Gastrocnemius medialis (tissue), 4 donors: ENCODE measurements at regions of chr1 and their contacts with region 1.

Region 1: GRCh38 chr1:1033009-1033587 is 13.2 kb downstream of the AGRN start:
- DNase-seq: peak; percentile 38 to 75
- ATAC-seq: peak; percentile 69 to 88
- H3K4me3 ChIP-seq: peak overlapping the region; percentile 15 to 48 (median 43)
- H3K27ac ChIP-seq: no peak overlapping the region
- H3K4me1 ChIP-seq: peaks cover 5 to 19% of the 10 kb centered on the region in 2 donors
- H3K27me3 ChIP-seq: peaks cover 12 to 40% (median 35%) of the 10 kb centered on the region in 3 donors
- CTCF ChIP-seq: peak; percentile 61 to 88 (median 76)
- POLR2A ChIP-seq: no peak

Region 2: DNA sequence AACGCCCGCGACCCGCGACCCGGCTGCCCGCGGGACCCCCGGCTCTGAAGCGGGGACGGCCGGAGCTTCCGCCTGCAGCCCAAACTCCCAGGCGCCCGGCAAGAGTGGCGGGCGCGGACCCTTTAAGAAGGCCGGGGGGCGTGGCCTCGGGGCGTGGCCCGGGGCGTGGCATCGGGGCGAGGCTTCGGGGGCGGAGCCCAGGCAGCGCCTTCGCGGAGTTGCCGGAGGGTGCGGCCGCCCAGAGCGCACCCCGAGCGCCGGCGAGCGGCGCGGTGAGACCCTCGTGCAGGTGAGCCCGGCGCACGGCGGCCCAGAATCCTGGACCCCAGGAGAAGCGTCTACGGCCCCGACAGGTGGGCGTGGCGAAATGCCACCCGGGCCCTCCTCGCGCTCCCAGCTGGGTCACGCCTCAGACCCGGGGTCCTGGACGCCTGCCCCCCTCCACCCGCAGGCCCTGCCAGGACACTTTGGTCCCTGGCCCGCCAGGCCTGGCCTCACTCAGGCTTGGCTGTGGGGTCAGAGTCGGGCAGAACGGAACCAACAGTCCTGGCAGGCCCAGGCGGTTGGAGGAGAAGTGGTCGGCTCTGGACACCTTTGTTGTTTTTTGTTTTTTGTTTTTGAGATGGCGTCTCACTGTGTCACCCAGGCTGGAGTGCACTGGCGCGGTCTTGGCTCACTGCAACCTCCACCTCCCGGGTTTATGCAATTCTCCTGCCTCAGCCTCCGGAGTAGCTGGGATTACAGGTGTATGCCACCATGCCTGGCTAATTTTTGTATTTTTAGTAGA is 26.6 kb after region 1 on chr1:
- in situ Hi-C with region 1: no loop called
- intact Hi-C with region 1: loop called (anchors 1 kb)
- DNase-seq: peak; percentile 65 to 82
- ATAC-seq: peak; percentile 88 to 93
- H3K4me3 ChIP-seq: peak overlapping the region; percentile 47 to 83 (median 64)
- H3K27ac ChIP-seq: no peak overlapping the region
- H3K4me1 ChIP-seq: peaks cover 10 to 18% of the 10 kb centered on the region in 2 donors
- H3K27me3 ChIP-seq: peaks cover 48 to 56% (median 51%) of the 10 kb centered on the region in 3 donors
- CTCF ChIP-seq: peak in 1 of 5 experiments; percentile 6
- POLR2A ChIP-seq: peak in 1 of 2 donors; percentile 13

Region 3: DNA sequence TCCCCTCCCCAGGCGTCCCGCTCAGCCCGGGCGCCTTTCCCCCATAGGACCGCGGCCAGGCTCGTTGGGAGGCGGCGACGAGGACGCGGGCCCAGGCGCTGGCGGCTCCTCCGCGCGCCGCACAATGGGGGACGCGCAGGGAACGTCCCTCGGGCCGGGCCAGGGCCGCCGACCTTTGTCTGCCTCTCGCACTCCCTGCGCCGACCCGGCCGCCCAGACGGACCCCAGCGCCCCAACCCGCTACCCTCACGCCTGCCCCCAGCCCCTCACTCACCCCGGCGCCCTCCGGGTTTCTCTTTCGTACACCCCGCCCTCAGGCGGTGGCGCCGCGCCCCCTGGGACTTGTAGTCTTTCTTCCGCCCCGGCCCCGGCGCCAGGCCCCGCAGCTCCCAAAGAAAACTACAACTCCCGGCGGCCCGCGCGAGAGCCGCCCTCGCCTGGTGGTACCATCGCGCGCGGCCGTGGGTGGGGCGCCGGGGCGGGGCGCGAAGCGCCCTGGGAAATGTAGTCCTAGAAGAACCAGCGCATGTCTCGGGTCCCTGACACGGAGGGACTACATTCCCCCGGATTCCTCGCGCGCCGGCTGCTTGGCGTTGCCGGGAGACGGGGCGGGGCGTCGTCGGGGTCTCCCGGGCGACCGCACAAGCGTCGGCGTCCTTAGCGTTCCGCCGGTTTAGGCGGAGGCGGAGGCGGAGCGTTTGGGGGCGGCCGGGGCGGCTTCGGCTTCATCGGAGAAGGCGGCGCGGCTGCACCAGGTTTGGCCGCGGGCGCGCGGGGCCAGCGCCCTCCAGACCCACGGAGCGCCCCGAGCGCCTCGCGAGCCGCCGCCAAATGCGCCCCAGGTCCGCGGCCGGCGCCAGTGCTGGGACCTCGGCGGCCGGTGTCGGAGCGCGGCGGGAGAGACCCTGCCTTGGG is 82.9 kb after region 1 on chr1 and contains the start of gene C1orf159:
- in situ Hi-C with region 1: no loop called
- intact Hi-C with region 1: loop called (anchors 10 kb)
- DNase-seq: peak; percentile 96 to 99
- ATAC-seq: peak; percentile 99
- H3K4me3 ChIP-seq: peak within 1 kb of the TSS; percentile 57 to 97 (median 76)
- H3K27ac ChIP-seq: peak within 1 kb of the TSS; percentile 63 to 85 (median 74)
- H3K4me1 ChIP-seq: peaks cover 3 to 7% of the 10 kb centered on the region in 2 donors
- H3K27me3 ChIP-seq: peaks cover 0 to 14% (median under 1%) of the 10 kb centered on the region in 3 donors
- CTCF ChIP-seq: no peak
- POLR2A ChIP-seq: no peak
- total RNA-seq, gene C1orf159: 2.8 to 6.4 (median 5.3) TPM

Region 4: DNA sequence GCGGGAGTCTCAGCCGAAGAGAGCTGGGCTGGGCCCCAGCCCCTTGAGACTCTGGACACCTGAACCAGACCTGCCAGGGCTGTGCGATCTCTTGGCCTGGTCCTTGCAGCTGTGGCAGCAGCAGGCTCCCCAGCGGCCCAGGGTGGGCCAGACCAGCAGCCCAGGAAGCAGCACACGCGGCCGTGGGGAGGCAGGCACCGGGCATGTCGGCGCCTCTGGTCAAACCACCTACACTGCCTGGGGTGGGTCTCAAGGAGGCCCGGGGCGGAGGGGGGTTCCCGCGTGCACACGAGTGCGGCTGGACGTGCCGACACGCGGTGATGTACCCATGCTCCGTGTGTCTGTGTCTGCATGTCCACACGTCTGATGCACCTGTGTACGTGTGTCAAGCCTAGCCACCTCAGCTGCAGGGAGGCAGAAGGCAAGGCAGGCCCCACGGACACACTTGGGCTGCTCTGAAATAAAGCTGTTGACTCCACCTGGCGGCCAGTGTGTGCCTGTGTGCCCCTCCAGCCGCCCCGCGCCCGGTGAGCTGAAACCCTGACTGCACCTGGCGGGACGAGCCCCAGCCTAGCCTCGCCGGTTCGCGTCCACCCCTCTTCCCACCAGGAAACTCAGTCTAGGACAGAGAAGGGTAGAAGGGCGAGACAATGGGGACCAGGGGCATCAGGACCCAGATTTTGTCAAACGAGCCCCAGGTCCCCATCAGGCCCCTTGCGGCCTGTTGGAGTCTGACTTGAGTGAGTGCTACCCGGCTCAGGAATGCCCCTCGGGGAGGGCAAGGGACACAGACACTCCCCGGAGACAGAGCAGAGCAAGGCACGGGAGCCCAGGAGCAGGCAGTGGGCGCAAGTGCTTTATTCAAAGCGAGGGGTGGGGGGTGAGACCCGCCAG is 258.7 kb after region 1 on chr1:
- in situ Hi-C with region 1: no loop called
- intact Hi-C with region 1: loop called (anchors 5 kb)
- DNase-seq: peak in 1 of 2 donors; percentile 54
- ATAC-seq: peak; percentile 48 to 79
- H3K4me3 ChIP-seq: no peak overlapping the region
- H3K27ac ChIP-seq: no peak overlapping the region
- H3K4me1 ChIP-seq: no peaks in the 10 kb centered on the region
- H3K27me3 ChIP-seq: peaks cover 3 to 11% (median 8%) of the 10 kb centered on the region in 3 donors
- CTCF ChIP-seq: peak; percentile 26 to 68 (median 63)
- POLR2A ChIP-seq: no peak

Region 5: DNA sequence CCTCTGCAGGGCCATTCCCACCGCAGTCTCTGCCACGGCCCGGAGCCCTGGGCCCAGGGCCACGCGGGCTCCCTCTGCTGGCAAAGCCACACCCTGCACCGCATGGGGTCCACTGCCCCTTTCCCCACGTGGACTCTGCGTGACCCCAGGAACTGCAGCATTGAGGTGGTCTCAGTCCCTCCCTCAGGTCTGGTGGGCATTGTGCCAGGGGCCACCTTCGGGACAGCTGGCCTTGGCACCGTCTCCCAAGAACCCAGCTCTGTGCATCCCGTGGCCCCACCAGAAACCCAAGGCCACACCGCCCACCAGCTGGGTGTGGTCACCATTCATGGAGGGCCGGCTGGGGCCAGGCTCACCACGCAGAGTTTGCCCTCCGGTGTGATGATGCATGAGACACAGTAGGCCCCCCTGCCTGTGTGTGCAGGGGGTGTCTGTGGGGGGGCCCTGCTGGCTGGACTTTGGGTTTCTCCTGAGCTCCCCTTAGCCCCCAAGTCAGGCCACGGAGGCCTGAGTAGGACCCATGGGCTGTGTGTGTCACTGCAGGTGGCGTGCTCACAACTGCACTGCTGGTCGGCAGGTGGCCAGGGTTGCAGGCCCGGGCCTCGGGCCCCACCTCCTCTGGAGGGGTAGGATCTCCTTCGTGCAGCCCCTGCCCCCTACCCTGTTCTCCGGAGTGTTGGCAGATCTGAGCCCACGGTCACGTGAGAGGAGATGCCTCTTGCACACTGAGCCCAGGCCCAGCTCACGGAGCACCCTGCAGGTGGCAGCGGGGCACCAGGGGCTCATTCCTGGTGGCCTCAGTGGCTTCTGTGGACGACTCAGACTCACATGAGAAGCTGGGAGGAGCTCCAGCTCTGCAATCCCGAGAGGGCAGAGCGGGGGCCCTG is 408.1 kb after region 1 on chr1:
- in situ Hi-C with region 1: no loop called
- intact Hi-C with region 1: loop called (anchors 1 kb)
- DNase-seq: peak in 1 of 2 donors; percentile 36
- ATAC-seq: peak in 1 of 2 donors; percentile 78
- H3K4me3 ChIP-seq: no peak overlapping the region
- H3K27ac ChIP-seq: no peak overlapping the region
- H3K4me1 ChIP-seq: peaks cover 3 to 19% of the 10 kb centered on the region in 2 donors
- H3K27me3 ChIP-seq: peaks cover 0 to 20% (median 7%) of the 10 kb centered on the region in 3 donors
- CTCF ChIP-seq: peak; percentile 80 to 96 (median 91)
- POLR2A ChIP-seq: no peak

Region 6: DNA sequence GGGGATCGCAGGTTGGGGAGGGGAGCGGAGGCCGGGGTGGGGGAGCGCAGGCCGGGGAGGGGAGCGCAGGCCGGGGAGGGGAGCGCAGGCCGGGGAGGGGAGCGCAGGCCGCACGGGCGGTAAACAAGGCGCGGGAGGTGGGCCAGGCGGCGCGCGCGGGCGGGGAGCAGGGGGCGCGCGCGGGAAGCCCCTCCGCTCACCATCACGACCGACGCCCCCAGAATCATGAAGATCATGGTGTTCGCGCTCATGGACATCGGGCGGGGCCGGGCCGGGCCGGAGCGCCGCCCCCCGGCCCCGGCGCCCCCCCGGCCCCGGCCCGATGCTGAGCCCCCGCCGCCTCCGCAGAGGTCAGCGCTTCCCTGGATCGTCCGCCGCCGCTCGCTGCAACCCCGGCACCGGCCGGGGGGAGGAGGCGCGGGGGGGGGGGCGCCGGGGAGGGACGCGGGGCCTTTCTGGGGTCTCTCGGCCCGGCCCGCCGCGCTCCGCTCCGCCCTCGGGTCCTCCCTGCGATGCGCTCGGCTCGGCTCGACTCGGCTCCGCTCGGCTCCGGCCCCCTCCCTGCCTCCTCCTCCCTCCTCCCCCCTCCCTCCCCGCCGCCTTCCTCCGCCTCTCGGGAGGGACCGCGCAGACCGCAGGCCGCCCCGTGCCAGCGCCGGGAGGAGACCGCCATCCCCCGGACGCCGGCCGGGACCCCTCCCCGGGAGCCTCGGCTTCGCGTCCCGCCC is 507.2 kb after region 1 on chr1 and contains the start of gene TMEM240:
- in situ Hi-C with region 1: no loop called
- intact Hi-C with region 1: no loop called
- DNase-seq: peak; percentile 41 to 48
- ATAC-seq: peak; percentile 27 to 53
- H3K4me3 ChIP-seq: peak within 1 kb of the TSS; percentile 57 to 64 (median 58)
- H3K27ac ChIP-seq: peak within 1 kb of the TSS; percentile 66 to 80 (median 75)
- H3K4me1 ChIP-seq: peaks cover 8 to 46% of the 10 kb centered on the region in 2 donors
- H3K27me3 ChIP-seq: no peaks in the 10 kb centered on the region
- CTCF ChIP-seq: no peak
- POLR2A ChIP-seq: peak in 1 of 2 donors; percentile 20
- total RNA-seq, gene TMEM240: 1.1 to 2.0 (median 1.9) TPM in 3 of 4 donors, not detected in the other